ENCODE measurements at regions of chr5 and their contacts with region 1.

Region 1: DNA sequence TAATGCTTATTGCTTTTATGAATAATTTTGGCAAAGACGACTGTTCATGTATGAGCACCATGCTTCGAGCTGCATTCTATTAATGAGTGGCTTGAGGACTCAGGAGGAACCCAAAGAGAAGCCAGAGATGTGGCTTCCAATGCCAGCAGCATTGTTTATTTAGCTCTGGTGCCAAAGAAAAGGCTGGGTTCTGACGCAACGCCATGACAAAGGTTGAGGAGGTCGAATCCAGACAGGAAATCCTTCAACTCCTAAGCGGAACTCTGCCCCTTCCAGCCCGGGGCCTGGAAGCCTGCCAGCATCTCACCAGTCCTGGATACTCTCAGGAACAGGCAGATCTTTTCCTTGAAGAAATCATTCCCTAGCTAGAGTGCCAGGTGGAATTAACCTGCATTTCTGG is 104.4 kb downstream of the ARHGAP26 start:
- DNase-seq: no peak
- H3K4me3 ChIP-seq: no peak overlapping the region
- H3K27ac ChIP-seq: no peak overlapping the region
- H3K4me1 ChIP-seq: no peaks in the 10 kb centered on the region
- H3K27me3 ChIP-seq: no peaks in the 10 kb centered on the region

Region 2: GRCh38 chr5:142720641-142721271 is 153.8 kb before region 1 on chr5:
- in situ Hi-C with region 1: loop called (anchors 5 kb)
- DNase-seq: no peak
- H3K4me3 ChIP-seq: no peak overlapping the region
- H3K27ac ChIP-seq: no peak overlapping the region
- H3K4me1 ChIP-seq: peaks cover 27% of the 10 kb centered on the region
- H3K27me3 ChIP-seq: no peaks in the 10 kb centered on the region